ENCODE measurements at regions of chr7 and their contacts with region 1.

Region 1: DNA sequence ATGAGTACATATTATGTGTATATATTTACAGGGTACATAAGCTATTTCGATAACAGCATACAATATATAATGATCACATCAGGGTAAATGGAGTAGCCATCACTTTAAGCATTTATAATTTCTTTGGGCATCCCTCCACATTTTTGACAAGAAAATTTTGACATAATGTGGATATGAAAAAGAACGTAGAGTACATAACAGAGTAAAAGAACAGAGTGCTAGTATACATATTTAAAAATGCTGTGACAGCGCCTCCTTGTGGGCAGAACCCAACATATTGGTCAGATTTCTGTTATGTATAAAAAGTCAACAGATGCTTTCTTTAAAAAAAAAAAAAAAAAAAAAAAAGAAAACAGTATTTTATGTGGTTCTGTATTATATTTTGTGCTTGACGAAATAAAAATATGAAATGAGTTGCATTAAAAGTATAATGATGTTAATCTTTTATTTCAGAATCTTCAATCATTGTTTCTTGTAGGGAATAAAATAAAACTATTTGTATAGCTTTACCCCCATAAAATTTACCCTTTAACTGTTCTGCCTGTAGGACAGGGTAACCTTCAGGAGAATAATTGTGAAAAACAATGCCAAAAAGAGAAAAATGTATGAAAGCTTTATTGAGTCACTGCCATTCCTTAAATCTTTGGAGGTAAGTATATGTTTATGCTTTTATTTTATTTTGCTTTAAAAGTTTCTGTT is 18.3 kb upstream of the HBP1 start:
- DNase-seq: no peak
- ATAC-seq: peak; percentile 85
- H3K4me3 ChIP-seq: no peak overlapping the region
- H3K27ac ChIP-seq: no peak overlapping the region
- H3K4me1 ChIP-seq: no peaks in the 10 kb centered on the region
- H3K27me3 ChIP-seq: no peaks in the 10 kb centered on the region; a peak in 2 of 4 replicates
- CTCF ChIP-seq: peak; percentile 45 to 59 (median 47); a peak in 5 of 6 replicates
- EP300 ChIP-seq: no peak
- POLR2A ChIP-seq: no peak
- RAD21 ChIP-seq: peak; percentile 69

Region 2: GRCh38 chr7:106542550-106543220 is 607.8 kb before region 1 on chr7:
- CTCF ChIA-PET with region 1: interaction called, 27 read pairs
- POLR2A ChIA-PET with region 1: no interaction called
- RAD21 ChIA-PET with region 1: no interaction called
- SMC1A ChIA-PET with region 1: interaction called, 5 read pairs
- in situ Hi-C with region 1: no loop called
- intact Hi-C with region 1: no loop called
- DNase-seq: peak; percentile 57
- ATAC-seq: peak; percentile 95
- H3K4me3 ChIP-seq: no peak overlapping the region
- H3K27ac ChIP-seq: no peak overlapping the region
- H3K4me1 ChIP-seq: no peaks in the 10 kb centered on the region; the same call in 1 of the 2 replicates
- H3K27me3 ChIP-seq: no peaks in the 10 kb centered on the region
- CTCF ChIP-seq: peak; percentile 70 to 77 (median 74)
- EP300 ChIP-seq: no peak
- POLR2A ChIP-seq: no peak
- RAD21 ChIP-seq: peak; percentile 94

Region 3: DNA sequence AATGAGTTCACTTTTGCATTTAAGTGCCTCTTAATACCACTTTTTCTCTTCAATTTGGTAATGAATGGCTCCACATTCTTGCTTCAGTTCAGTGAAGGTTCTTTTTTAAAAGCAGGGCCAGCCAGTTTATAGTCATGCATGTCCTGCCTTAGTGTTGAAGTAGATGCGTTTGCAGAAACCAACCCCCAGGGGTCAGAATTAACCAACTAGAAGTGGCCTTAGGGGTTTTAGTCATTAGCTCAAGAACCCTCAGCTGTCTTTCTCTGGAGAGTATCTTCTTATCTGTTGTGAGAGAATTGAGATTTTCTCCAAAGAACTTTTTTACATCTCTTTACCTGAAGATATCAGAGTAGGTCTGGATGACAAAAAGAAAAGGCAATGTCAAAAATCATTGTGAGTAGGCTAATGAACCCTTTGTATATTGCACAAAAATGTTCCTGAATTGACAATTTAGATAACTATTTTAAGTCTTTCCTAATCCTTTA is 203.2 kb before region 1 on chr7:
- CTCF ChIA-PET with region 1: interaction called, 77 read pairs
- POLR2A ChIA-PET with region 1: no interaction called
- RAD21 ChIA-PET with region 1: interaction called, 45 read pairs
- SMC1A ChIA-PET with region 1: interaction called, 49 read pairs
- in situ Hi-C with region 1: loop called (anchors 5 kb)
- intact Hi-C with region 1: loop called (anchors 1 kb)
- DNase-seq: no peak
- ATAC-seq: peak; percentile 87
- H3K4me3 ChIP-seq: no peak overlapping the region
- H3K27ac ChIP-seq: no peak overlapping the region
- H3K4me1 ChIP-seq: no peaks in the 10 kb centered on the region
- H3K27me3 ChIP-seq: peaks cover 0 to 6% of the 10 kb centered on the region in 2 experiments; a peak in 2 of 4 replicates
- CTCF ChIP-seq: peak; percentile 53 to 55 (median 53); a peak in 5 of 6 replicates
- EP300 ChIP-seq: no peak
- POLR2A ChIP-seq: no peak
- RAD21 ChIP-seq: peak; percentile 78

Region 4: GRCh38 chr7:107080099-107080505 is 70.4 kb before region 1 on chr7:
- CTCF ChIA-PET with region 1: interaction called, 10 read pairs
- POLR2A ChIA-PET with region 1: no interaction called
- RAD21 ChIA-PET with region 1: no interaction called
- SMC1A ChIA-PET with region 1: interaction called, 4 read pairs
- in situ Hi-C with region 1: no loop called
- intact Hi-C with region 1: no loop called
- DNase-seq: no peak
- ATAC-seq: no peak
- H3K4me3 ChIP-seq: no peak overlapping the region
- H3K27ac ChIP-seq: no peak overlapping the region
- H3K4me1 ChIP-seq: no peaks in the 10 kb centered on the region
- H3K27me3 ChIP-seq: no peaks in the 10 kb centered on the region
- CTCF ChIP-seq: no peak
- EP300 ChIP-seq: no peak
- POLR2A ChIP-seq: no peak
- RAD21 ChIP-seq: no peak

Region 5: DNA sequence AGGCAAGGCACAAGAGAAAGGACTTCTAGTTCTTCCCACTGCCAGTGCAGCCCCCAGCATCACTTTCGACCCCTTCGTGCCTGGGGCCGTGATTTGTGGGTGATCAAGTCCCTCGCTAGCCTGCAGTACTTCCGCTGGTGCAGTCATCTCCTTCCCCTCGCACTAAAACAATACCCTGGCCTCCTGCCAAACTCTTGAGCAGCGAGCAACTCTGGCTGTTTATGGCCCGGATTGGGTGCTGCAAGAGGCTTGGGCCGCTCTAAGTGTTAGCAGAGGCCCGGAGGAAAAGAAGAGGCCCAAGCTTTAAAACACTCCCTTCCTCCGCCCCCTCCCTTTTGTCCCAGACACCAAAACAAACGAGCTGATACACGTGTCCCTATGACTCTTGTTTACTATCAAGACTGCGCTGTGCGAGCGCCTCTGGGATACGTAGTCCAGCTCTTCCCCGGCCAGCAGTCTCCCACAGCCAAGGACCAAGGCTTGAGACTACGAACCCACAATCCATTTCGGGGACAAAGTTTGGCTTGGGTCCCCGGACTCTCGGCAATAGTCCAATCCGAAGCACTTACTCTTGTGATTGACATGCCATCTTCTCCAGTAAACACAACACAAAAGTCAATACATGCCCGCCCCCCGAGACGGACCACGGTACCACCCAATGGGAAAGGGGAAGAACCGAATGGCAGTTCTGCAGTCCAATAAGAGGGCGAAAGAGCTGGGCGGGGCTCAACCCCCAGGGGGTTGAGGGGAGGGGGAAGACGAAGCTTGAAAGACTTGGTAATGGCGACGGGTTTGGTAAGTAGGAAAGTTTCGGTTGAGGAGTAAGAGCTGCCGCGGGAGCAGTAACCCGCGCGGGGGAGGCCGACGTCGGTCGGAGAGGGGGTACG is 18.0 kb after region 1 on chr7 and contains the start of gene HBP1:
- CTCF ChIA-PET with region 1: interaction called, 16 read pairs
- POLR2A ChIA-PET with region 1: no interaction called
- RAD21 ChIA-PET with region 1: interaction called, 11 read pairs
- SMC1A ChIA-PET with region 1: interaction called, 51 read pairs
- in situ Hi-C with region 1: no loop called
- intact Hi-C with region 1: no loop called
- DNase-seq: peak; percentile 100
- ATAC-seq: peak; percentile 90
- H3K4me3 ChIP-seq: peak within 1 kb of the TSS; percentile 86
- H3K27ac ChIP-seq: peak within 1 kb of the TSS; percentile 90
- H3K4me1 ChIP-seq: peaks cover 17% of the 10 kb centered on the region
- H3K27me3 ChIP-seq: no peaks in the 10 kb centered on the region
- CTCF ChIP-seq: no peak
- EP300 ChIP-seq: peak in 1 of 2 experiments; percentile 26; a peak in 1 of 4 replicates
- POLR2A ChIP-seq: peak; percentile 78
- RAD21 ChIP-seq: no peak
- polyA plus RNA-seq, gene HBP1: 8.5 to 10.2 TPM

Region 6: GRCh38 chr7:107286751-107287621 is 136.5 kb after region 1 on chr7:
- CTCF ChIA-PET with region 1: no interaction called
- POLR2A ChIA-PET with region 1: no interaction called
- RAD21 ChIA-PET with region 1: no interaction called
- SMC1A ChIA-PET with region 1: no interaction called
- in situ Hi-C with region 1: no loop called
- intact Hi-C with region 1: no loop called
- DNase-seq: no peak
- ATAC-seq: no peak
- H3K4me3 ChIP-seq: no peak overlapping the region
- H3K27ac ChIP-seq: no peak overlapping the region
- H3K4me1 ChIP-seq: no peaks in the 10 kb centered on the region
- H3K27me3 ChIP-seq: no peaks in the 10 kb centered on the region
- CTCF ChIP-seq: no peak
- EP300 ChIP-seq: no peak
- POLR2A ChIP-seq: no peak
- RAD21 ChIP-seq: no peak

Region 7: GRCh38 chr7:107528466-107528865 is 377.9 kb after region 1 on chr7:
- CTCF ChIA-PET with region 1: no interaction called
- POLR2A ChIA-PET with region 1: no interaction called
- RAD21 ChIA-PET with region 1: no interaction called
- SMC1A ChIA-PET with region 1: no interaction called
- in situ Hi-C with region 1: no loop called
- intact Hi-C with region 1: no loop called
- DNase-seq: no peak
- ATAC-seq: no peak
- H3K4me3 ChIP-seq: no peak overlapping the region
- H3K27ac ChIP-seq: no peak overlapping the region
- H3K4me1 ChIP-seq: no peaks in the 10 kb centered on the region
- H3K27me3 ChIP-seq: no peaks in the 10 kb centered on the region
- CTCF ChIP-seq: no peak
- EP300 ChIP-seq: no peak
- POLR2A ChIP-seq: no peak
- RAD21 ChIP-seq: no peak

Region 8: GRCh38 chr7:107725151-107725740 is 574.7 kb after region 1 on chr7:
- CTCF ChIA-PET with region 1: interaction called, 7 read pairs
- POLR2A ChIA-PET with region 1: no interaction called
- RAD21 ChIA-PET with region 1: interaction called, 5 read pairs
- SMC1A ChIA-PET with region 1: interaction called, 4 read pairs
- in situ Hi-C with region 1: no loop called
- intact Hi-C with region 1: loop called (anchors 5 kb)
- DNase-seq: peak; percentile 12
- ATAC-seq: peak; percentile 61
- H3K4me3 ChIP-seq: no peak overlapping the region
- H3K27ac ChIP-seq: no peak overlapping the region
- H3K4me1 ChIP-seq: no peaks in the 10 kb centered on the region
- H3K27me3 ChIP-seq: no peaks in the 10 kb centered on the region
- CTCF ChIP-seq: peak; percentile 47 to 75 (median 54)
- EP300 ChIP-seq: no peak
- POLR2A ChIP-seq: no peak
- RAD21 ChIP-seq: peak; percentile 81